Esophagus muscularis mucosa (tissue), 4 donors: ENCODE measurements at regions of chr19 and their contacts with region 1.

Region 1: GRCh38 chr19:8580710-8581281 is 3.6 kb upstream of the MYO1F start:
- DNase-seq: peak; percentile 95
- H3K4me3 ChIP-seq: peak overlapping the region in 1 of 4 donors; percentile 13
- H3K27ac ChIP-seq: no peak overlapping the region
- H3K4me1 ChIP-seq: peaks cover 0 to 32% (median 28%) of the 10 kb centered on the region in 4 donors
- H3K27me3 ChIP-seq: peaks cover 0 to 38% (median 4%) of the 10 kb centered on the region in 4 donors
- CTCF ChIP-seq: peak in 2 of 3 experiments; percentile 99 to 100
- EP300 ChIP-seq: no peak
- POLR2A ChIP-seq: no peak

Region 2: DNA sequence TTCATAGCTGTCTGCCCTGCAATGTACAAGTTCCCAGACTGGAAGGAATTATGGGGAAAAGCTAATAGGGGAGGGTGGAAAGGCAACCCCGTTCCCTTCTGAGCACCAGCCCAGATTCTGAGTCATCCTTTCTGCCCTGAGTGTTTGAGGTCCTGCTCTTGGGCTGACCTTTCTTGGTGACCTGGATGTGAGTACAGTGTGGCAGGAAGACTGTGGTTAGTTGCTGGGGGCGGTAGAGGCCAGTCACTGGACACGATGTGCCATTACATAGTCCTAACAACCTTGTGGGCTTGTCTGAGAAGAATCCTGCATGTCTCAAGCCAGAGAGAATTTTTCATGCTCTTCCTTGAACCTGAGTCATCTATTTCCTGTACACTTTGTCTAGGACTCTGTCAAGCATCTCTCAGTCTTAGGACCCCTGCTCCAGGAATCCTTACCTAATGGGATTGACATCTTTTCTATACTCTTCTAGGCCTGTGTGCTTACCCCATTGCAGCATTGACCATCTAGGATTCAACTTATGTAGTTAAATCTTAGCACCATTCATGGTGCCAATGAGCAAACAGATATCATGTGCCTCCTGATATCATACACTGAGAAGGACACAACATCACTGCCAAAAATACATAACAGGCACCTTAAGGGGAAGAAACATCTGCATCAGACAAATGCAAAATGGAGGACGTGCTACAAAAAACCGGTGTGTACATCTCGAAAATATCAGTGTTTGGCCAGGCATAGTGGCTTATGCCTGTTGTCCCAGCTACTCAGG is 225.0 kb before region 1 on chr19:
- intact Hi-C with region 1: loop called (anchors 5 kb)
- DNase-seq: no peak
- H3K4me3 ChIP-seq: no peak overlapping the region
- H3K27ac ChIP-seq: peak overlapping the region in 2 of 4 donors; percentile 13 to 35
- H3K4me1 ChIP-seq: peaks cover 23 to 39% (median 29%) of the 10 kb centered on the region in 4 donors
- H3K27me3 ChIP-seq: peaks cover 0 to 24% (median 0%) of the 10 kb centered on the region in 4 donors
- CTCF ChIP-seq: no peak
- EP300 ChIP-seq: no peak
- POLR2A ChIP-seq: no peak

Region 3: GRCh38 chr19:8532225-8532624 is 48.6 kb before region 1 on chr19:
- intact Hi-C with region 1: no loop called
- DNase-seq: no peak
- H3K4me3 ChIP-seq: no peak overlapping the region
- H3K27ac ChIP-seq: no peak overlapping the region
- H3K4me1 ChIP-seq: peaks cover 0 to 4% (median 0%) of the 10 kb centered on the region in 4 donors
- H3K27me3 ChIP-seq: no peaks in the 10 kb centered on the region
- CTCF ChIP-seq: no peak
- EP300 ChIP-seq: no peak
- POLR2A ChIP-seq: no peak

Region 4: GRCh38 chr19:8615813-8616596 is 35.2 kb after region 1 on chr19:
- intact Hi-C with region 1: loop called (anchors 5 kb)
- DNase-seq: no peak
- H3K4me3 ChIP-seq: no peak overlapping the region
- H3K27ac ChIP-seq: no peak overlapping the region
- H3K4me1 ChIP-seq: peaks cover 5 to 12% (median 11%) of the 10 kb centered on the region in 4 donors
- H3K27me3 ChIP-seq: peaks cover 0 to 9% (median 0%) of the 10 kb centered on the region in 4 donors
- CTCF ChIP-seq: peak; percentile 79 to 86 (median 85)
- EP300 ChIP-seq: no peak
- POLR2A ChIP-seq: no peak

Region 5: DNA sequence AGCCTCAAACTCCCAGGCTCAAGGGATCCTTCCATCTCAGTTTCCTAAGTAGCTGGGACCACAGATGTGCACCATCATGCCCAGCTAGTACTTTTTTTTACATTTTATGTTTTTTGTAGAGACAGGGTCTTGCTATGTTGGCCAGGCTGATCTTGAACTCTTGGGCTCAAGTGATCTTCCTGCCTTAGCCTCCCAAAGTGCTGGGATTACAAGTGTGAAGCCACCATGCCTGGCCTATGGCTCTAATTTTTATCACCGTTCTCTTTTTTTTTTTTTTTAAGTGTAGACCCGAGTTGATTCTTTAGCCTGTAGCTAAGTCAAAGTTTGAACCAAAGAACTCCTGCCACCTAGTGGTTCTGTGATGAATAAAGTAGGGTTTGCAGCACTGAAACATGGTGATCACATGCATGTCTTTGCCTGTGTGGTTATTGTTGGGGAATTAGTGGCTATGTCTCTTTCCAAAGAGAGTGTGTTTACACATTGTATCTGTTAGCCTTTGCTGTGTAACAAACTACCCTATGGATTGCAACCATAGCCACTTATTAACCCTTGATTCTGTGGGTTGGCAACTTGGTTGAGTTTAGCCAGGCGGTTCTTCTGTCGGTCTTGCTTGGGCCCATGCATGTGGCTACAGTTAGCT is 61.2 kb after region 1 on chr19:
- intact Hi-C with region 1: loop called (anchors 5 kb)
- DNase-seq: no peak
- H3K4me3 ChIP-seq: no peak overlapping the region
- H3K27ac ChIP-seq: no peak overlapping the region
- H3K4me1 ChIP-seq: peaks cover 0 to 19% (median 6%) of the 10 kb centered on the region in 4 donors
- H3K27me3 ChIP-seq: peaks cover 0 to 20% (median 0%) of the 10 kb centered on the region in 4 donors
- CTCF ChIP-seq: peak; percentile 35 to 54 (median 44)
- EP300 ChIP-seq: no peak
- POLR2A ChIP-seq: no peak